ENCODE measurements at regions of chr5 and their contacts with region 1.

Region 1: GRCh38 chr5:111278845-111279504 is 54.8 kb downstream of the CAMK4 start:
- DNase-seq: peak; percentile 72 to 88 (median 81)
- H3K4me3 ChIP-seq: no peak overlapping the region
- H3K4me3 Mint-ChIP-seq: peak overlapping the region in 1 of 7 donors; percentile 39
- H3K27ac ChIP-seq: no peak overlapping the region
- H3K27ac Mint-ChIP-seq: peak overlapping the region in 7 of 8 donors; percentile 1 to 89 (median 58)
- H3K4me1 ChIP-seq: peaks cover 39% of the 10 kb centered on the region
- H3K4me1 Mint-ChIP-seq: peaks cover 51 to 85% (median 80%) of the 10 kb centered on the region in 3 donors
- H3K27me3 ChIP-seq: no peaks in the 10 kb centered on the region
- H3K27me3 Mint-ChIP-seq: no peaks in the 10 kb centered on the region

Region 2: GRCh38 chr5:111116550-111116949 is 162.4 kb before region 1 on chr5:
- CTCF ChIA-PET with region 1: no interaction called
- POLR2A ChIA-PET with region 1: no interaction called
- DNase-seq: no peak
- H3K4me3 ChIP-seq: no peak overlapping the region
- H3K4me3 Mint-ChIP-seq: no peak overlapping the region
- H3K27ac ChIP-seq: no peak overlapping the region
- H3K27ac Mint-ChIP-seq: peak overlapping the region in 1 of 8 donors; percentile 64
- H3K4me1 ChIP-seq: no peaks in the 10 kb centered on the region
- H3K4me1 Mint-ChIP-seq: peaks cover 2 to 4% (median 4%) of the 10 kb centered on the region in 3 donors
- H3K27me3 ChIP-seq: no peaks in the 10 kb centered on the region
- H3K27me3 Mint-ChIP-seq: no peaks in the 10 kb centered on the region

Region 3: DNA sequence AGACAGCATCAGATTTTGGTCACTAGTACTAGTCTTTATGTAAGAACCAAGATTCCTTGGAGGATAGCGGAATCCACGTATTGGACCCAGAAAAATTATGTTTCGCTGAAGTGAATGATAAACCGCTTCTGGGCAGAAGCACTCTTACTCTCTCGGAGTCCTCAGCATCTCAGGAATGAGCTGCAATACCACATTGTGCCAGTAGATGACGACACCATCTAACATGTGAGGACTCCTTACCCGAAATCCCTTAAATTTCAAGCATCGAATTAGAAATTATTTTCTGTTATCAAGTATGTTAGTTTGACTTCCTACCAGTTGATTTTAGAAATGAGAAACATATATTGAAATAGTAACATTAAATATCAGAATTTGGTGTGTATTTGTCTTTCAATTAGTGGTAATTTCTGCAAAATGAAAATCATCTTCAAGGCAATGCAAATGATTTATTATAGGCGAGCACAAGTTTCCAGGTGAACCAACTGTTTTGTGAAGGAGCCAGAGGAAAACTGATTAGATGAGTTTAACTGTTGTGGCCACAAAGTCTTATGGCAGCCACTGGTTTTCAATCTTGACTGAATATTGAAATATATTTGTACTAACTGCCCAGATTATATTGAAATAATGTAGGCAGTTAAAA is 120.8 kb before region 1 on chr5:
- CTCF ChIA-PET with region 1: interaction called, 64 read pairs
- POLR2A ChIA-PET with region 1: interaction called, 3 read pairs
- DNase-seq: peak; percentile 61 to 82 (median 66)
- H3K4me3 ChIP-seq: no peak overlapping the region
- H3K4me3 Mint-ChIP-seq: no peak overlapping the region
- H3K27ac ChIP-seq: no peak overlapping the region
- H3K27ac Mint-ChIP-seq: no peak overlapping the region
- H3K4me1 ChIP-seq: no peaks in the 10 kb centered on the region
- H3K4me1 Mint-ChIP-seq: peaks cover 4 to 11% (median 5%) of the 10 kb centered on the region in 3 donors
- H3K27me3 ChIP-seq: no peaks in the 10 kb centered on the region
- H3K27me3 Mint-ChIP-seq: peaks cover 0 to 12% of the 10 kb centered on the region in 2 donors

Region 4: DNA sequence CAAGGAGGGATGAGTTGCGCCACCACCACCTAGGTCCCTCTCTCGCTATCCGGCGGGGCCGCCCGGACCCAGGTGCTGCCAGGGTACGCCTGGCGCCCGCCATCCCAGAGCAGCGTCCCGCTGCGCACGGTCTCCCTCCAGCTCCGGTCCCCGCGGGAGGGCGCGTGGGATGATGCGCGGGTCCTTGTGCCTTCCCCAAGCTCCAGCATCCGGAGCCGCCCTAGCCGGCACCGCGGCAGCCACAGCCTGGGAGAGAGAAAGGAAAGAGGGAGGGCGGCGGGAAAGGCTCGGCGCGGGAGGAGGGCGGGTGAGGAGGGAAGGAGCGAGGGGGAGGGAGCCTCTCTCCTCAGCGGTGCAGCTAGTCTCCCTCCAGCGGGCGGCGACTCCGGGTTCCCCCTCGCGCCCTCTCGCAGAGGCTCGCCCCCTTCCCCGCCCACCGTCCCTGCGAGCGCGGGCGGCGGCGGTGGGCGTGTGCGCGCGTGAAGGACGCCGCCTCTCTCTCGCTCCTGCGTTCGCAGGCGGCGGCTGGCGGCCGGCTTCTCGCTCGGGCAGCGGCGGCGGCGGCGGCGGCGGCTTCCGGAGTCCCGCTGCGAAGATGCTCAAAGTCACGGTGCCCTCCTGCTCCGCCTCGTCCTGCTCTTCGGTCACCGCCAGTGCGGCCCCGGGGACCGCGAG is 54.9 kb before region 1 on chr5 and contains the start of gene CAMK4:
- CTCF ChIA-PET with region 1: interaction called, 45 read pairs
- POLR2A ChIA-PET with region 1: interaction called, 4 read pairs
- DNase-seq: peak; percentile 80 to 88 (median 84)
- H3K4me3 ChIP-seq: peak within 1 kb of the TSS; percentile 85
- H3K4me3 Mint-ChIP-seq: peak within 1 kb of the TSS; percentile 89 to 98 (median 98)
- H3K27ac ChIP-seq: peak within 1 kb of the TSS; percentile 52
- H3K27ac Mint-ChIP-seq: peak within 1 kb of the TSS; percentile 86 to 98 (median 94)
- H3K4me1 ChIP-seq: peaks cover 20% of the 10 kb centered on the region
- H3K4me1 Mint-ChIP-seq: peaks cover 37 to 40% (median 38%) of the 10 kb centered on the region in 3 donors
- H3K27me3 ChIP-seq: no peaks in the 10 kb centered on the region
- H3K27me3 Mint-ChIP-seq: peaks cover 0 to 1% of the 10 kb centered on the region in 2 donors
- total RNA-seq, gene CAMK4: 57.4 to 68.7 TPM

Region 5: DNA sequence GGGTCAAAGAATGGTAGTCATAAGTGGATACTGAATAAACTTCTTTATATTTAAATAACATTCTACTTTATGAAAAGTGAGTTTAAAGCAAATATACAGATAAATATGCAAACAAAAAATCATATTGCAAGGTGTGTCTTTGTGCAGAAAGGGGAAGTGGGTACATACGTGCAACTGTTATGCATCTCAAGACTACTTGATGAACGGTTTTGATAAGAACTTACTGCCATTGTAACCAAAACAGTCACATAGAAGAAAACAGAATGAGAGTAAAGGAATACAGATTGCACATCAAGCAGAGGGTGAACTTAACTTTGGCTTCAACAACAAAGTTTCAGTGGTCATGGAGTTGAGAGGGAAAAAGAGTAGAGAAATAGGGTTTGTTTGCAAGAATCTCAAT is 44.9 kb before region 1 on chr5:
- CTCF ChIA-PET with region 1: interaction called, 12 read pairs
- POLR2A ChIA-PET with region 1: no interaction called
- DNase-seq: peak in 1 of 5 donors; percentile 61
- H3K4me3 ChIP-seq: peak overlapping the region; percentile 16
- H3K4me3 Mint-ChIP-seq: peak overlapping the region; percentile 8 to 80 (median 74)
- H3K27ac ChIP-seq: no peak overlapping the region
- H3K27ac Mint-ChIP-seq: peak overlapping the region; percentile 75 to 99 (median 92)
- H3K4me1 ChIP-seq: peaks cover 95% of the 10 kb centered on the region
- H3K4me1 Mint-ChIP-seq: peaks cover 96 to 100% (median 96%) of the 10 kb centered on the region in 3 donors
- H3K27me3 ChIP-seq: no peaks in the 10 kb centered on the region
- H3K27me3 Mint-ChIP-seq: no peaks in the 10 kb centered on the region

Region 6: DNA sequence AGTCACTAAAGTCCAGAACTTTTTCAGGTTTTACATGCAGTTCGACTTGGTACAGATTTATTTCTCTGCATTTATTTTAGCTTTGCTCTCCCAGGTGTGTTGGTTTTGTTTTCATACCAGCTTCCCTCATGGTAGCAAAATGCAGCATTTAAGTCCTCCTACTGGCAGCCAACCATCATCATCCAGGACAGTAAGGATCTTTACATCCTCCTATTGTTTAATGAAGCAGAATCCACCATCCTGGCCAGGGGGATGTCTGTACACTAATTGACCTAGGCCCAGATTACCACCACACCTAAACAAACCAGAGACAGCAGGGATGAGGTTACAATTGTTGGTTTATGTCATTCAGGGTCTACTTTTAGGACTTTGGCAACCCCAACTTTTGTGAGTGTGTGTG is 32.5 kb before region 1 on chr5:
- CTCF ChIA-PET with region 1: interaction called, 10 read pairs
- POLR2A ChIA-PET with region 1: no interaction called
- DNase-seq: no peak
- H3K4me3 ChIP-seq: no peak overlapping the region
- H3K4me3 Mint-ChIP-seq: peak overlapping the region in 1 of 7 donors; percentile 12
- H3K27ac ChIP-seq: no peak overlapping the region
- H3K27ac Mint-ChIP-seq: peak overlapping the region in 6 of 8 donors; percentile 12 to 75 (median 50)
- H3K4me1 ChIP-seq: peaks cover 82% of the 10 kb centered on the region
- H3K4me1 Mint-ChIP-seq: peaks cover 70 to 88% (median 87%) of the 10 kb centered on the region in 3 donors
- H3K27me3 ChIP-seq: no peaks in the 10 kb centered on the region
- H3K27me3 Mint-ChIP-seq: no peaks in the 10 kb centered on the region

Region 7: GRCh38 chr5:111254613-111255012 is 24.4 kb before region 1 on chr5:
- CTCF ChIA-PET with region 1: interaction called, 17 read pairs
- POLR2A ChIA-PET with region 1: no interaction called
- DNase-seq: peak; percentile 38 to 74 (median 61)
- H3K4me3 ChIP-seq: no peak overlapping the region
- H3K4me3 Mint-ChIP-seq: peak overlapping the region; percentile 28 to 82 (median 70)
- H3K27ac ChIP-seq: no peak overlapping the region
- H3K27ac Mint-ChIP-seq: peak overlapping the region; percentile 82 to 95 (median 90)
- H3K4me1 ChIP-seq: peaks cover 80% of the 10 kb centered on the region
- H3K4me1 Mint-ChIP-seq: peaks cover 64 to 82% (median 74%) of the 10 kb centered on the region in 3 donors
- H3K27me3 ChIP-seq: no peaks in the 10 kb centered on the region
- H3K27me3 Mint-ChIP-seq: no peaks in the 10 kb centered on the region

Region 8: GRCh38 chr5:111364992-111365391 is 86.0 kb after region 1 on chr5:
- CTCF ChIA-PET with region 1: no interaction called
- POLR2A ChIA-PET with region 1: no interaction called
- DNase-seq: peak in 1 of 5 donors; percentile 5
- H3K4me3 ChIP-seq: no peak overlapping the region
- H3K4me3 Mint-ChIP-seq: no peak overlapping the region
- H3K27ac ChIP-seq: no peak overlapping the region
- H3K27ac Mint-ChIP-seq: peak overlapping the region in 2 of 8 donors; percentile 14 to 58
- H3K4me1 ChIP-seq: no peaks in the 10 kb centered on the region
- H3K4me1 Mint-ChIP-seq: peaks cover 35 to 81% (median 81%) of the 10 kb centered on the region in 3 donors
- H3K27me3 ChIP-seq: no peaks in the 10 kb centered on the region
- H3K27me3 Mint-ChIP-seq: no peaks in the 10 kb centered on the region

Region 9: DNA sequence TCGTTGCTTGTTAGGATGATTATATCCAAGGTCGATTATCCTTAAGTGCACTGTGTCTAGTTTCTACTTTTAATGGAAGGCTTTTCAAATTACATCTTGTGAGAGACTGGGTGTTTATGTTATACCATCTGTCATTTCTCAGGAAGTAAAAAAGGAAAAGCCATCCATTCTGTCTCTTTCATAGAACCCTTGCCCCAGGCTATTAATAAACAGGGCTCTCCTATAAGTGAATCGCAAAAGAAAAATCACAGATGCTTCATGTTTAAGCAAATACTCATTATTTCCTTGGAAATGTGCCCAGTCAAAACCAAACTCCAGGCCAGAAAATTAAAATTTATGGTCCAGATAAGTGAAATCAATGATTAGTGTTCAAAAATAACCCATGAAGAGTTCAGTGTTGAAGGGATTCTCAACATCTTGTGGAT is 175.2 kb after region 1 on chr5:
- CTCF ChIA-PET with region 1: no interaction called
- POLR2A ChIA-PET with region 1: no interaction called
- DNase-seq: no peak
- H3K4me3 ChIP-seq: no peak overlapping the region
- H3K4me3 Mint-ChIP-seq: no peak overlapping the region
- H3K27ac ChIP-seq: no peak overlapping the region
- H3K27ac Mint-ChIP-seq: peak overlapping the region in 1 of 8 donors; percentile 22
- H3K4me1 ChIP-seq: no peaks in the 10 kb centered on the region
- H3K4me1 Mint-ChIP-seq: peaks cover 9 to 41% (median 30%) of the 10 kb centered on the region in 3 donors
- H3K27me3 ChIP-seq: no peaks in the 10 kb centered on the region
- H3K27me3 Mint-ChIP-seq: no peaks in the 10 kb centered on the region

Region 10: GRCh38 chr5:111537141-111538024 is 258.4 kb after region 1 on chr5:
- CTCF ChIA-PET with region 1: no interaction called
- POLR2A ChIA-PET with region 1: no interaction called
- DNase-seq: no peak
- H3K4me3 ChIP-seq: no peak overlapping the region
- H3K4me3 Mint-ChIP-seq: no peak overlapping the region
- H3K27ac ChIP-seq: no peak overlapping the region
- H3K27ac Mint-ChIP-seq: no peak overlapping the region
- H3K4me1 ChIP-seq: no peaks in the 10 kb centered on the region
- H3K4me1 Mint-ChIP-seq: no peaks in the 10 kb centered on the region
- H3K27me3 ChIP-seq: no peaks in the 10 kb centered on the region
- H3K27me3 Mint-ChIP-seq: peaks cover 16 to 27% of the 10 kb centered on the region in 2 donors

Measured in CD8-positive, alpha-beta memory T cell (primary cell).